MCF 10A (cell line): ENCODE measurements at regions of chr19 and their contacts with region 1.

Region 1: GRCh38 chr19:11798391-11799330 is at the start of gene ZNF491:
- DNase-seq: no peak
- H3K4me3 Mint-ChIP-seq: no peak within 1 kb of the TSS
- H3K27ac Mint-ChIP-seq: no peak within 1 kb of the TSS
- H3K4me1 Mint-ChIP-seq: no peaks in the 10 kb centered on the region
- H3K27me3 Mint-ChIP-seq: no peaks in the 10 kb centered on the region
- CTCF ChIP-seq: no peak
- total RNA-seq, gene ZNF491: not detected in 2 replicates

Region 2: DNA sequence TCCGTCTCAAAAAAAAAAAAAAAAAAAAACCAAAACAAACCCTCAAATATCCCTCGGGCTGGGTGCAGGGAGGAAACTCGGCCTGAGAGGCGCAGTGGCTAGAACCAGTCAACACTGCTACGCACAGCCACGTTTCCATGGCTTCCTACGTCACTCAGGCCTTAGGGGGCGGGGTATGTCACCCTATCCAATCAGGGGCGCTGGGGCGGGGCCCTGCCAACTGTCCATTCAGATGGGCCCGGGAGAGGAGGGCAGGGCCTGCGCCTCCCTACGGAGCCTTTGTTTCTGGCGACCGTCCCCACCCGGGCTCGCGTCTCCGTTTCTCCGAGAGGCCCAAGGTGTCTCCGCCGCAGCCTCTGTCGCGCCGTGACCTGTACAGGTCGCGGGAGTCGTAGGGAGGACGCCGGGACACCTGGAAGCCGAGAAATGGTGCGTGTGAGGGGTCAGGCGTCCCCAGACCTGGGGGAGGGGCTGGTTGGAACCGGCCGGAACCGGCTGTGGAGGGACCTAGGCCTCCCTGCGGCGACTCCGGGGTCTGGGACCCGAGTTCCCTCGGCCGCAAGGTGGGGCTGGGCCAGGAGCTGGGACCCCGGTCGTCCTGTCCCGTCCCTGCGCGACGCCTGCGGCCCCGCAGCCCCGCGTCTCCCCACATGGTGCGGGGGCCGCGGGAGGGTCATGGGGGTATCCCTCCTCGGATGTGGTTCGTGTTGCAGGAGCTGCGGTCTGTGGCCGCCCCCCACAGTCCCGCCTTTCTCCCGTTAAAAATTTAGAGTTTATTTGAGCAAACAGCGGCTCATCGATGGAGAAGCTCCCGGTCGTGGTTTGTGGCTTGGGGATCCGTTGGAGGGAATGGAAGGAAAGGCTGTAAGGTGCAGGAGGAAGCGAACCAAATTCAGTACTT is 201.2 kb before region 1 on chr19 and contains the start of gene ZNF627:
- CTCF ChIA-PET with region 1: no interaction called
- POLR2A ChIA-PET with region 1: no interaction called
- intact Hi-C with region 1: no loop called
- DNase-seq: peak; percentile 99
- H3K4me3 Mint-ChIP-seq: peak within 1 kb of the TSS; percentile 82
- H3K27ac Mint-ChIP-seq: peak within 1 kb of the TSS; percentile 92
- H3K4me1 Mint-ChIP-seq: peaks cover 7% of the 10 kb centered on the region
- H3K27me3 Mint-ChIP-seq: no peaks in the 10 kb centered on the region
- CTCF ChIP-seq: peak; percentile 5
- total RNA-seq, gene ZNF627: 8.7 and 10.9 TPM in 2 replicates

Region 3: GRCh38 chr19:11699931-11700794 is 98.5 kb before region 1 on chr19:
- CTCF ChIA-PET with region 1: interaction called, 11 read pairs
- POLR2A ChIA-PET with region 1: no interaction called
- intact Hi-C with region 1: no loop called
- DNase-seq: peak; percentile 45
- H3K4me3 Mint-ChIP-seq: no peak overlapping the region
- H3K27ac Mint-ChIP-seq: no peak overlapping the region
- H3K4me1 Mint-ChIP-seq: no peaks in the 10 kb centered on the region
- H3K27me3 Mint-ChIP-seq: no peaks in the 10 kb centered on the region
- CTCF ChIP-seq: peak; percentile 62

Region 4: DNA sequence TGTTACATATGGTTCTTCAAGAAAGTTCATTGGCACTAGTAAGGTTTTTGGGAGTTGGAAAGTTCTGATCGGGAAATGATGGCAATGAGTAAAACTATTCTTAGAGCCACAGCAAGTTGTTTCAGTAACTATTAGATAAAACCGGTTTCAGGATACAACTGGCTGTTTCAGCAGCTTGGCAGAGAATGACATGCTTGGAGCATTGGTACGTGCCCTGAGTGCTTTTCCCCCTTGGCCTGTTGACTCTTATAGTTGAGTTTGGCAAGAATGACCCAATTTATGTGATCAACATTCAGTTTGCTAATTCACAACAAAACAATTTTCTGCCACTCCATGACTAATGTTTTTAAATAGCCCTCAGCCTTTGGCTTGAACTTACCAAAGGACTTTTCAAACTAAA is 11.1 kb before region 1 on chr19:
- CTCF ChIA-PET with region 1: interaction called, 14 read pairs
- POLR2A ChIA-PET with region 1: interaction called, 4 read pairs
- intact Hi-C with region 1: no loop called
- DNase-seq: no peak
- H3K4me3 Mint-ChIP-seq: no peak overlapping the region
- H3K27ac Mint-ChIP-seq: no peak overlapping the region
- H3K4me1 Mint-ChIP-seq: no peaks in the 10 kb centered on the region
- H3K27me3 Mint-ChIP-seq: no peaks in the 10 kb centered on the region
- CTCF ChIP-seq: no peak

Region 5: DNA sequence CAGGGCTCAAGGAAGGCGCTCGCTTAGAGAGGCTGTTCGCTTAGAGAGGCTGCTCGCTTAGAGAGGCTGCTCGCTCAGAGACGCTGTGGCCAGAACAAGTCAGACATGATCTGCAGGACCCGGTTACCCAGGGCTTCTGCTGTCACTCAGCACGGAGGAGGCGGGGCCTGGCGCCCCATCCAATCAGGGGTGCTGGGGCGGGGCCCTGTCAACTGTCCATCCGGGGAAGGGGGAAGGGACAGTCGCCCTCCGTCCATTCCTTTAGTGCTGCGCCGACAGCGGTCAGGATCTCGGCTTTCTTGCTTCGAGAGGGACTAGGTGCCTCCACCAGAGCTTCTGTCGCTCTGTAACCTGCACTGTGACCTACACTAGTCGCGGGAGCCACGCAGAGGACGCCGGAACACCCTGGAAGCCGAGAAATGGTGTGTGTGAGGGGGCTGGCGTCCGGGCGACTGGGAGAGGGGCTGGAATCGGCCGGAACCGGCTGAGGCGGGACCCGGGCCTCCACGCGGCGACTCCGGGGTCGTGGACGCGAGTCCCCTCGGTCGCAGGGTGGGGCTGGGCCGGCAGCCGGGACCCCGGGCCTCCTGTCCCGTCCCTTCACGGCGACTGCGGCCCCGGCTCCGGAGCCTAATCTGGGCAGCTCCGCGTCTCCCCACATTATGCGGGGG is 15.5 kb after region 1 on chr19 and contains the start of gene ZNF440:
- CTCF ChIA-PET with region 1: interaction called, 25 read pairs
- POLR2A ChIA-PET with region 1: interaction called, 5 read pairs
- intact Hi-C with region 1: no loop called
- DNase-seq: peak; percentile 81
- H3K4me3 Mint-ChIP-seq: peak within 1 kb of the TSS; percentile 82
- H3K27ac Mint-ChIP-seq: peak within 1 kb of the TSS; percentile 69
- H3K4me1 Mint-ChIP-seq: no peaks in the 10 kb centered on the region
- H3K27me3 Mint-ChIP-seq: no peaks in the 10 kb centered on the region
- CTCF ChIP-seq: no peak
- total RNA-seq, gene ZNF440: 2.6 and 3.5 TPM in 2 replicates

Region 6: DNA sequence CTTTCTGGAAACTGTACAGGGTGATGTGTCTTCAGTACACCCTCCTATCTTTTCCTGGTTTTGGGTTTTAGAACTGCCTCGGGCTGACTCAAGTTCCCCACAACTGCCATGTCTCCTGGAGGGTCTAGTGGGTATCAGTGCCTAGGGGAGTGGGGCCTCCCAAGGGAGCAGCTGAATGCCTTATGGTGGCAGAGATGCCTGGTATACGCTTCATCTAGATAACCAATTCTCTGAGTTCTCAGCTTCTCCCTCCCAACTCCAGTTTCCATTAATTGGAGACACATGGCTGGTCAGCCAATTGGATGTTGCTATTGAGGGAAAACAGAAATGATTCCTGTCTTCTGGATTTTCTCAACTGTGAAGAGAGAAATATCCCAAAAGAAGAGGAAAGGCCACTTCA is 62.6 kb after region 1 on chr19:
- CTCF ChIA-PET with region 1: no interaction called
- POLR2A ChIA-PET with region 1: no interaction called
- intact Hi-C with region 1: no loop called
- DNase-seq: no peak
- H3K4me3 Mint-ChIP-seq: no peak overlapping the region
- H3K27ac Mint-ChIP-seq: no peak overlapping the region
- H3K4me1 Mint-ChIP-seq: no peaks in the 10 kb centered on the region
- H3K27me3 Mint-ChIP-seq: no peaks in the 10 kb centered on the region
- CTCF ChIP-seq: no peak

Region 7: GRCh38 chr19:11924886-11925650 is 126.4 kb after region 1 on chr19 and contains the start of gene ZNF700:
- CTCF ChIA-PET with region 1: interaction called, 20 read pairs
- POLR2A ChIA-PET with region 1: no interaction called
- intact Hi-C with region 1: no loop called
- DNase-seq: peak; percentile 97
- H3K4me3 Mint-ChIP-seq: peak within 1 kb of the TSS; percentile 82
- H3K27ac Mint-ChIP-seq: peak within 1 kb of the TSS; percentile 39
- H3K4me1 Mint-ChIP-seq: peaks cover 16% of the 10 kb centered on the region
- H3K27me3 Mint-ChIP-seq: no peaks in the 10 kb centered on the region
- CTCF ChIP-seq: no peak
- total RNA-seq, gene ZNF700: 5.6 and 5.9 TPM in 2 replicates